ENCODE measurements at regions of chr10 and their contacts with region 1.

Region 1: GRCh38 chr10:3500408-3500856 is 284.6 kb downstream of the KLF6 start:
- DNase-seq: peak; percentile 88 to 98
- ATAC-seq: peak; percentile 97 to 99
- H3K4me3 ChIP-seq: peak overlapping the region; percentile 21; the same call in 1 of the 3 replicates
- H3K27ac ChIP-seq: peak overlapping the region; percentile 65 to 82
- H3K4me1 ChIP-seq: peaks cover 29% of the 10 kb centered on the region
- CTCF ChIP-seq: no peak
- EP300 ChIP-seq: peak; percentile 53 to 87; a peak in 3 of 5 replicates
- POLR2A ChIP-seq: no peak
- RAD21 ChIP-seq: peak; percentile 9 to 11; a peak in 3 of 5 replicates

Region 2: DNA sequence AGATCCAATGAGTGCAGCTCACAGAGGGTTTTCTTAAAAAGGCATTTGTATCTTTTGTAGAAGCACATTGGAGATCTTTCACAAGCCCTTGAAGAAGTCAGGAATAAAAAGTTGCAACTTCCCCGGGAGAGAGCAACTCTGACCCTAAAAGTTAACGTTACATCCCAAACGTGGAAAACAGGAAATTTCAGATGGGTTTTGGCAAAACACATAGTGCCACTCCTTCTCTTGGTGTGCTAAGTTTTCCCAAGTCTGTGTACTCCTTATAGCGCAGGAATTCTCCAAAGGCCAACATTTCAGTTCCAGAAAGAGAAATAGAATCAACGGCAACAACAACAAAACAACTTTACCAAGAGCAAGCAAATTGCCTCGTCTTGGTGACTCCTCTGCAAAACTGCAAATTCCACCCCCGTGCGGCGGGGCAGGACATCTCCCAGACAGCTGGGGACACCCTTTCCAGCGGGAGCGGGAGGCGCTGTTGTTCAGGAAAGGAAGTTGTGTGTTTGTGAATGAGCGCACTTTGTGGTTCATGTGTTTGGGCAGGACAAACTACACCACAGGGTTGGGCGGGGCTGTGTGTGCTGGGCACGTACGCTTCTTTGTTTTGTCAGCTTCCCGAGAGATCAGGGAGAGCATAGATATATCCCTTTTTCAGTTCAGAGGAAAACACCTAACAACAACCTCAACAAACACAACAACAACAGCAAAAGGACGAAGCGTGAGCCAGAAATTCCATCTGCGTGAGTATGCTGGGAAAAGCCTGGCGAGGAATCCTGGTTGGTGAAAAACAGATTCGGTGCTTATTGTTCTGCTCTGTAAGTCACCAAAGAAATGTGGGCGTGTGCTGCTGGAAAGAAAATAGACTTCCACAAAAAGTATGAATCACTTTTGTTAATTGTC is 33.1 kb before region 1 on chr10:
- CTCF ChIA-PET with region 1: interaction called, 6 read pairs
- POLR2A ChIA-PET with region 1: interaction called, 12 read pairs
- DNase-seq: peak; percentile 73 to 98
- ATAC-seq: peak; percentile 76 to 80
- H3K4me3 ChIP-seq: peak overlapping the region; percentile 33
- H3K27ac ChIP-seq: peak overlapping the region; percentile 82 to 92
- H3K4me1 ChIP-seq: peaks cover 47% of the 10 kb centered on the region
- CTCF ChIP-seq: peak; percentile 91
- EP300 ChIP-seq: no peak
- POLR2A ChIP-seq: no peak
- RAD21 ChIP-seq: peak; percentile 86 to 91

Region 3: GRCh38 chr10:3554121-3554522 is 53.7 kb after region 1 on chr10:
- CTCF ChIA-PET with region 1: no interaction called
- POLR2A ChIA-PET with region 1: no interaction called
- DNase-seq: no peak
- ATAC-seq: no peak
- H3K4me3 ChIP-seq: no peak overlapping the region
- H3K27ac ChIP-seq: no peak overlapping the region
- H3K4me1 ChIP-seq: no peaks in the 10 kb centered on the region; the same call in 2 of the 3 replicates
- CTCF ChIP-seq: no peak
- EP300 ChIP-seq: no peak
- POLR2A ChIP-seq: no peak
- RAD21 ChIP-seq: no peak

Region 4: GRCh38 chr10:3647074-3647473 is 146.6 kb after region 1 on chr10:
- CTCF ChIA-PET with region 1: no interaction called
- POLR2A ChIA-PET with region 1: no interaction called
- DNase-seq: no peak
- ATAC-seq: no peak
- H3K4me3 ChIP-seq: no peak overlapping the region
- H3K27ac ChIP-seq: no peak overlapping the region
- H3K4me1 ChIP-seq: no peaks in the 10 kb centered on the region
- CTCF ChIP-seq: no peak
- EP300 ChIP-seq: no peak
- POLR2A ChIP-seq: no peak
- RAD21 ChIP-seq: no peak